ENCODE measurements at regions of chr1 and their contacts with region 1.

Region 1: DNA sequence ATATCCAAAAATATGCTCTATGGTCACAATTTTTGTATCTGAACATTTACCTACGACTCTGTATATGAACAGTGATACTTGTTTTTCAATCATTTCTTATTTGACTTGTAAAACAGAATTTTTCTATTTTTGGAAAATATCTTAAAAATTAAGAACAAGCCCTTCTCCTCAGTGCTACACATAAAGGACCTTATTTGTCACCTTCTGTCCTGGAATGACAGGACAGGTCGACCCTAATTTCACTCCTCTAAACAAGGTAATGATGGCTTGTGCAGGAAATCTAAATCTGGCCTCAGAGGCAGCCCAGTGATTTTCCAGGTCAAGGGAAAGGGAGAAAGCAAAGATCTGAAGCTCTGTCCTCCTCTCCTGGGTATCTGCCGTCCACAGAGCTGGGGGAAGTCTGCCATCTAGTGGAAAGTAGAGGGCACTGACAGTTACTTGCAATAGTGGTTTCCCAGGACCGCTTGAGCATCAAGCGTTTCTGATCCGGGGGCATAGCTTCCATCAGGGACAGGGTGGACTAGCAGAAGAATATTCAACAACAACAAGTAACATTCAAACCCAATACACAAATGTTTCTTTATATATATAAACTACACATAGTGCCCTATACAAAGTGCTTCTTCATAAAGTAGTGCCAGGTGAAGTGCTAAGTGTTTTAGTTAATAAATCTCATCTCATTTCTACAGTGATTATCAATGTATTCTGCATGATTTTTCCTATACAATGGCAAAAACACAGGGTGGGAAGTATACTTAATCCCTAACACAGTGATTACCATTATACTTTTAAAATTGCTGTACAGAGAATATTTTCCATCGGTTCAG is 74.6 kb downstream of the SLC25A24 start:
- DNase-seq: peak; percentile 77
- ATAC-seq: peak; percentile 94
- H3K4me3 Mint-ChIP-seq: no peak overlapping the region
- H3K27ac Mint-ChIP-seq: no peak overlapping the region
- H3K4me1 Mint-ChIP-seq: peaks cover 2% of the 10 kb centered on the region
- H3K27me3 Mint-ChIP-seq: no peaks in the 10 kb centered on the region

Region 2: DNA sequence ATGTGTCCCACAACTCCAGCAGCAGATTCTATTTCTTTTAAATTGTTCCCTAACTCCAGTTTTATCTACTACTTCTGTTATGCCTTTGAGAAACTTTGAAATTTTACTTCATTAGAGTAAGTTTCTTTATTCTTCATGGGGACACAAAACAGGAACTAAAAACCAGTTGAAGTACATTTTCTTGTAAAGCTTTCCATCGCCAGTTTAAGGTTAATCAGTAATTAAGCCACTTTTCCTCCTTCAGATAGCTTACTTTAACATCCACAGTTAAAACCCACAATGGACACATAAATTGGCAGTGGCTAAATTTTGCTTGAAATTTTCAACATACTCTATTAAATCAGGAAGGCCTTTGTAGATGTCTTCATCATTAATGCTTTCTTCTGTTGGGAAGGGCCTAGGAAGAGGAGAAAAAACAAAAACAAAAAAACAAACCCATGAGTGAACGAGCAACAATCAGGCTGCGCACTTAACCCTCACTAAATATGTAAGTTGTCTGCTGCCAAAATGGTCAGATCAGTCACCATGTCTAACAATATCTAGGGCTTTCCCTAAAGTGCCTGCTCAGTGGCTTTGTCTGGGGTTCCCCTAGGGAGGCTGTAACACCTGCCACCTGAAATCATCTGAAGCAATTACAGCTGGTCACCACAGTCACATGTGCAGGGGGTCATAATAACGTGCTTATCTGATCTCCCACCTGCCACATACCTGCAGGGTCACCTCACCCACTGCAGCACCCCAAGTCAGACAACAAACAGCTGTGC is 348.4 kb before region 1 on chr1:
- CTCF ChIA-PET with region 1: interaction called, 268 read pairs
- POLR2A ChIA-PET with region 1: no interaction called
- intact Hi-C with region 1: loop called (anchors 1 kb)
- DNase-seq: no peak
- ATAC-seq: no peak
- H3K4me3 Mint-ChIP-seq: no peak overlapping the region
- H3K27ac Mint-ChIP-seq: no peak overlapping the region
- H3K4me1 Mint-ChIP-seq: peaks cover under 1% of the 10 kb centered on the region
- H3K27me3 Mint-ChIP-seq: no peaks in the 10 kb centered on the region

Region 3: GRCh38 chr1:107897438-107898345 is 227.8 kb before region 1 on chr1:
- CTCF ChIA-PET with region 1: no interaction called
- POLR2A ChIA-PET with region 1: no interaction called
- intact Hi-C with region 1: loop called (anchors 2 to 5 kb)
- DNase-seq: peak; percentile 18
- ATAC-seq: peak; percentile 79
- H3K4me3 Mint-ChIP-seq: peak overlapping the region; percentile 12
- H3K27ac Mint-ChIP-seq: peak overlapping the region; percentile 69
- H3K4me1 Mint-ChIP-seq: peaks cover 47% of the 10 kb centered on the region
- H3K27me3 Mint-ChIP-seq: no peaks in the 10 kb centered on the region

Region 4: DNA sequence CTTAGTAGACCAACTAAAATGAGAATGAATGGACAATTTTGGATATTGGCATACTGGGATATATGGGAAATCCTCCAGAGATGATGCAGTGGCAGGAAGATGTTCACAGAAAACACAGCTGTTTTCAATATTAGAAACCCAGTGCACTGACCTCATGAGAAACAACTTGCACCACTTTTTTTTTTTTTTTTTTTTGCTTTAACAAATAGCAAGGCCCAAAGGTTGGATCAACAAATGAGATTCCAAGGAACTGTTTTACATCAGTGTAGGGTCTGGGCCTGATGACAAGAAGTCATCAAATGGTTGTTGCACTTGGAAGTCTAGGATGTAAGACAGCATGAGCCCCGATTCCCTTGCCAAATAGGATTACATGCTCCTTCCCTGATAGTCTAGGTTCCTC is 36.0 kb before region 1 on chr1:
- CTCF ChIA-PET with region 1: no interaction called
- POLR2A ChIA-PET with region 1: no interaction called
- intact Hi-C with region 1: no loop called
- DNase-seq: no peak
- ATAC-seq: no peak
- H3K4me3 Mint-ChIP-seq: no peak overlapping the region
- H3K27ac Mint-ChIP-seq: no peak overlapping the region
- H3K4me1 Mint-ChIP-seq: no peaks in the 10 kb centered on the region
- H3K27me3 Mint-ChIP-seq: peaks cover 2% of the 10 kb centered on the region

Region 5: GRCh38 chr1:108141621-108142020 is 16.1 kb after region 1 on chr1:
- CTCF ChIA-PET with region 1: interaction called, 10 read pairs
- POLR2A ChIA-PET with region 1: interaction called, 3 read pairs
- intact Hi-C with region 1: no loop called
- DNase-seq: peak; percentile 19
- ATAC-seq: peak; percentile 53
- H3K4me3 Mint-ChIP-seq: no peak overlapping the region
- H3K27ac Mint-ChIP-seq: no peak overlapping the region
- H3K4me1 Mint-ChIP-seq: peaks cover 2% of the 10 kb centered on the region
- H3K27me3 Mint-ChIP-seq: no peaks in the 10 kb centered on the region

Measured in activated CD4-positive, alpha-beta T cell treated with anti-CD3 and anti-CD28 coated beads for 36 hours (primary cell).